Transverse colon (tissue), 4 donors: ENCODE measurements at regions of chr20 and their contacts with region 1.

Region 1: GRCh38 chr20:54219751-54220426 is 12.0 kb downstream of the PFDN4 start:
- DNase-seq: no peak
- H3K4me3 ChIP-seq: no peak overlapping the region
- H3K27ac ChIP-seq: no peak overlapping the region
- H3K4me1 ChIP-seq: no peaks in the 10 kb centered on the region
- H3K27me3 ChIP-seq: no peaks in the 10 kb centered on the region
- CTCF ChIP-seq: peak in 3 of 5 experiments; percentile 31 to 37 (median 37)
- EP300 ChIP-seq: no peak
- POLR2A ChIP-seq: no peak

Region 2: GRCh38 chr20:54633374-54634355 is 413.8 kb after region 1 on chr20:
- in situ Hi-C with region 1: loop called in 1 of 4 experiments (anchors 10 kb)
- intact Hi-C with region 1: no loop called
- DNase-seq: no peak
- H3K4me3 ChIP-seq: no peak overlapping the region
- H3K27ac ChIP-seq: no peak overlapping the region
- H3K4me1 ChIP-seq: no peaks in the 10 kb centered on the region
- H3K27me3 ChIP-seq: no peaks in the 10 kb centered on the region
- CTCF ChIP-seq: no peak
- EP300 ChIP-seq: no peak
- POLR2A ChIP-seq: no peak

Region 3: DNA sequence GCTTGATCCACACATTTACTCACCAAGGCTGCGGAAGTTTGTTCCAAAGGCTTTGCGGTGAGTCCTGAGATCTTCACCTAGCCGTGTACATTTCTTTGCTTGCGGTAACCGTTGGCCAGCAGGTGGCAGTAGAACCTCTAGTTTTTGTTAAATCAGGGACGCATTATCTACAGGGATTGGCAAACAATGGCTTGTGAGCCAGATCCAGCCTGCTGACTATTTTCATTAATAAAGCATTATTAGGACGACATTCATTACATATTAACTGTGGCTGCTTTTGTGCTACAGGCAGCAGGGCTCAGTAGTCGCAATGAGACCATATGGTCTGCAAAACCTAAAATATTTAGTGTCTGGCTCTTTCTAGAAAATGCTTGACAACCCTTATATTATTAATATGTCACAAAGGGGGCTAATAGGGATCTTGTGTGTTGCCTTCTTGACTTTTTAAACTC is 429.6 kb after region 1 on chr20:
- in situ Hi-C with region 1: loop called in 3 of 4 experiments (anchors 5 to 10 kb)
- intact Hi-C with region 1: loop called (anchors 5 kb)
- DNase-seq: peak; percentile 77
- H3K4me3 ChIP-seq: no peak overlapping the region
- H3K27ac ChIP-seq: no peak overlapping the region
- H3K4me1 ChIP-seq: no peaks in the 10 kb centered on the region
- H3K27me3 ChIP-seq: peaks cover 7% of the 10 kb centered on the region
- CTCF ChIP-seq: peak; percentile 51 to 79 (median 74)
- EP300 ChIP-seq: no peak
- POLR2A ChIP-seq: no peak